ENCODE measurements at regions of chr12 and their contacts with region 1.

Region 1: GRCh38 chr12:50751948-50752721 is 11.8 kb upstream of the ATF1 start:
- DNase-seq: no peak

Region 2: GRCh38 chr12:50699940-50700339 is 52.2 kb before region 1 on chr12:
- intact Hi-C with region 1: no loop called
- DNase-seq: no peak

Region 3: DNA sequence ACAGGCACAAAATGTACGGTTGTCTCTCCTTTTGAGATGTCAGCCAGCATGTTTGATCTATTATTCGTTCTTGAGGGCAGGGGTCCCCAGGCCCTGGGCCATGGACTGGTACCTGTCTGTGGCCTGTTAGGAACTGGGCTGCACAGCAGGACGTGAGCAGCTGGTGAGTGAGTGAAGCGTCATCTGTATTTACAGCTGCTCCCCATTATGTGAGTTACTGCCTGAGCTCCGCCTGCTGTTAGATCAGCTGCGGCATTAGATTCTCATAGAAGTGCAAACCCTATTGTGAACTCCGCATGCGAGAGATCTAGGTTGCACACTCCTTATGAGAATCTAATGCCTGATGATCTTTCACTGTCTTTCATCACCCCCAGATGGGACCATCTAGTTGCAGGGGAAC is 797.5 kb after region 1 on chr12:
- intact Hi-C with region 1: no loop called
- DNase-seq: no peak

Region 4: GRCh38 chr12:52091869-52092268 is 1339.7 kb after region 1 on chr12:
- intact Hi-C with region 1: loop called in 1 of 2 experiments (anchors 5 kb)
- DNase-seq: no peak

Measured in posterior vena cava (tissue), 2 donors.